ENCODE measurements at regions of chr17 and their contacts with region 1.

Region 1: DNA sequence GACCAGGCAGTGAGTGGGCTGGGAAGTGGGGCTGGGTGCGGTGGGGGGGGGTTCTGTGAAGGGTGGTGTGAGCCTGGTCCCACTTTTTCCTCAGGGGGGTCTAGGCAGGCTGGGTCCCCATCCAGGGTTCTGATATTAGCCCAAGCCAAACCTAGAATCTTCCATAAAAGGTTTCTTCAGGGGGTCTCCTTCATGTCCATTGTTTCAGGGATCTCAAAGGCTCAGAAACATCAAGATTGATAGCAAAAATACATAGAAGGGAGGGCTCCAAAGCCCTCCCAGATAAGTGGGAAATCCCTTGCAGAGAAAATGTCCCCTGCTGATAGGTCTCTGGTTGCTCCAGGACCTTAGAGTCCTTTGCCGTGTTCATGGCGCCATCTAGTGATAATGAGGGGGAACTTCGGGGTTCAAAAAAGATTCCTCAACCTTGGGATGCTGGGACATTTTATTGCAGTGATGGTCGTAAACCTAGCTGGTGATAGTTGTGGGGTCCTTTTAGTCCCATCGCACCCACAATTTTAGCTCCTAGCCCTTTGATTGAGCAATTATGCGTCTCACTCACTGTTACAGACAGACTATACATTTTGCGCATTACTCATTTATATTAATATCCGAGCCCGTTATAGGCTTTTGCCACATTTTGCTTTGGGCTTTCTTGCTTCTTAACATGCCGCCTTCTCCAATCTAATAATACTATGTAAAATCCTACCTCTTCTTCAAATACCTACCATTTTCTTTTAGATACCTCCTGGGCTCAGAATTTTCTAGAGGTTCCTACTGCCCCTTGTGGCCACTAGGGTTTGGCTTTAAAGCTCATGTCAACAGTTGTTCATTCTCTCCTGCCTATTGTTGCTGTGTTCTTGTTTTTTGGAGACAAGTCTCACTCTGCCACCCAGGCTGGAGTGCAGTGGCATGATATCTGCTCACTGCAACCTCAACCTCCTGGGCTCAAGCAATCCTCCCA is 35.1 kb downstream of the IGF2BP1 start:
- DNase-seq: peak; percentile 16
- ATAC-seq: peak; percentile 92
- H3K4me3 ChIP-seq: no peak overlapping the region
- H3K27ac ChIP-seq: no peak overlapping the region
- H3K4me1 ChIP-seq: no peaks in the 10 kb centered on the region
- H3K27me3 ChIP-seq: no peaks in the 10 kb centered on the region
- CTCF ChIP-seq: peak; percentile 69 to 96 (median 86)
- EP300 ChIP-seq: no peak
- POLR2A ChIP-seq: no peak
- RAD21 ChIP-seq: peak; percentile 97

Region 2: DNA sequence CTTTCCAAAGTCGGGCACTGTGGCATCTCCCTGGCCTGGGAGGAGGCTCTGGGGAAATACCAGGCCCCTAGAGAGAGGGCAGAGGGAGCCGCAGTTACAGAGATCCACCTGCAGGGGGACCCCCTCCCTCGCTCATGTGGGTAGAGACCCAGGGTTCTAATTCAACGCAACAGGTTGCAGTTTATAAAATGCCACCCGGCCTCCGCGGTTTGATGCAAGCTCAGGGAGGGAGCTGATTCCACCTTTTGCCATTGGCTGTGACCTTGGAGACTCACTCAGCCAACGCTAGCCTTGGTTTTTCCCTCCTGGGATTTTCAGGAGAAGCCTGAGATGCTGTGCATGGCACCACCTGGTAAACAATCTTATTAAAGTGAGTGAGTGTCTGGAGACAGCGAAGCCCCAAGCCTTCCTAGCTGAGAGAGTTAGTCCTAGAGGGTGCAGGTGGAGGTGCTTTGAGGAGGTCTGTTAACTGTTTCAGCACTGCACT is 227.3 kb before region 1 on chr17:
- CTCF ChIA-PET with region 1: interaction called, 18 read pairs
- POLR2A ChIA-PET with region 1: no interaction called
- RAD21 ChIA-PET with region 1: interaction called, 3 read pairs
- SMC1A ChIA-PET with region 1: interaction called, 10 read pairs
- in situ Hi-C with region 1: loop called (anchors 5 kb)
- intact Hi-C with region 1: loop called (anchors 2 kb)
- DNase-seq: no peak
- ATAC-seq: peak; percentile 98
- H3K4me3 ChIP-seq: no peak overlapping the region
- H3K27ac ChIP-seq: no peak overlapping the region
- H3K4me1 ChIP-seq: no peaks in the 10 kb centered on the region
- H3K27me3 ChIP-seq: no peaks in the 10 kb centered on the region; a peak in 2 of 4 replicates
- CTCF ChIP-seq: peak; percentile 89 to 95 (median 90)
- EP300 ChIP-seq: no peak
- POLR2A ChIP-seq: no peak
- RAD21 ChIP-seq: peak; percentile 93

Region 3: GRCh38 chr17:48892940-48893645 is 139.2 kb before region 1 on chr17:
- CTCF ChIA-PET with region 1: interaction called, 115 read pairs
- POLR2A ChIA-PET with region 1: interaction called, 5 read pairs
- RAD21 ChIA-PET with region 1: interaction called, 16 read pairs
- SMC1A ChIA-PET with region 1: interaction called, 7 read pairs
- in situ Hi-C with region 1: no loop called
- intact Hi-C with region 1: no loop called
- DNase-seq: no peak
- ATAC-seq: no peak; the same call in 2 of the 3 replicates
- H3K4me3 ChIP-seq: peak overlapping the region; percentile 76
- H3K27ac ChIP-seq: peak overlapping the region; percentile 75
- H3K4me1 ChIP-seq: peaks cover 3% of the 10 kb centered on the region; the same call in 1 of the 2 replicates
- H3K27me3 ChIP-seq: no peaks in the 10 kb centered on the region
- CTCF ChIP-seq: no peak
- EP300 ChIP-seq: no peak
- POLR2A ChIP-seq: no peak
- RAD21 ChIP-seq: no peak

Region 4: GRCh38 chr17:49003623-49004511 is 28.4 kb before region 1 on chr17:
- CTCF ChIA-PET with region 1: interaction called, 21 read pairs
- POLR2A ChIA-PET with region 1: no interaction called
- RAD21 ChIA-PET with region 1: interaction called, 4 read pairs
- SMC1A ChIA-PET with region 1: interaction called, 9 read pairs
- in situ Hi-C with region 1: no loop called
- intact Hi-C with region 1: no loop called
- DNase-seq: no peak
- ATAC-seq: peak; percentile 26; the same call in 2 of the 3 replicates
- H3K4me3 ChIP-seq: no peak overlapping the region
- H3K27ac ChIP-seq: no peak overlapping the region
- H3K4me1 ChIP-seq: no peaks in the 10 kb centered on the region
- H3K27me3 ChIP-seq: peaks cover 6 to 11% of the 10 kb centered on the region in 2 experiments
- CTCF ChIP-seq: no peak
- EP300 ChIP-seq: no peak
- POLR2A ChIP-seq: no peak
- RAD21 ChIP-seq: no peak

Measured in GM12878 (cell line).